Prostate gland (tissue), 2 donors: ENCODE measurements at regions of chr14 and their contacts with region 1.

Region 1: GRCh38 chr14:23478111-23478759 is 8.7 kb downstream of the NGDN start:
- DNase-seq: peak; percentile 44
- H3K4me3 ChIP-seq: no peak overlapping the region
- H3K27ac ChIP-seq: no peak overlapping the region
- H3K4me1 ChIP-seq: no peaks in the 10 kb centered on the region
- H3K27me3 ChIP-seq: no peaks in the 10 kb centered on the region
- CTCF ChIP-seq: peak; percentile 34 to 86 (median 76)
- POLR2A ChIP-seq: no peak

Region 2: DNA sequence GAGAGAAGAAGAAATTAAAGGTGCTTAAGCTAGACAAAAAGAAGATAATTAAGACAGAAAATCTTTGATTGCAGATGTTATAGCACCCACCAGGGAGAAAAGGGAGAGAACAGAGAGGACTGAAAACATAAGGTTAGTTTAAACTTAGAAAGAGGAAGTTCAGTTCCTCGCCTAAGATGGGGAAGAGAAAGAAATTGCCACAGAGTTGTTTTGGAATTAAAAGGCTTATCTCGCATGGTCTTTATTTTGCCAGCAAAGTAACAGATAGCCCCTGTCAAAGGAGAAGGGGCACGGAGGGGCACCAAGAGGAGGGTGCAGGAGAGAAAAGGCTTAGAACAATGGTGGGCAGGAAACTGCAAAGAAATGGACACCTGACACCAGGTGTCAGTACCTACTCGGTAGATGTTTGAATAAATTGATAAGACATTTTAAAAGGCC is 729.6 kb before region 1 on chr14:
- intact Hi-C with region 1: no loop called
- DNase-seq: no peak
- H3K4me3 ChIP-seq: no peak overlapping the region
- H3K27ac ChIP-seq: no peak overlapping the region
- H3K4me1 ChIP-seq: no peaks in the 10 kb centered on the region
- H3K27me3 ChIP-seq: no peaks in the 10 kb centered on the region
- CTCF ChIP-seq: no peak
- POLR2A ChIP-seq: no peak

Region 3: DNA sequence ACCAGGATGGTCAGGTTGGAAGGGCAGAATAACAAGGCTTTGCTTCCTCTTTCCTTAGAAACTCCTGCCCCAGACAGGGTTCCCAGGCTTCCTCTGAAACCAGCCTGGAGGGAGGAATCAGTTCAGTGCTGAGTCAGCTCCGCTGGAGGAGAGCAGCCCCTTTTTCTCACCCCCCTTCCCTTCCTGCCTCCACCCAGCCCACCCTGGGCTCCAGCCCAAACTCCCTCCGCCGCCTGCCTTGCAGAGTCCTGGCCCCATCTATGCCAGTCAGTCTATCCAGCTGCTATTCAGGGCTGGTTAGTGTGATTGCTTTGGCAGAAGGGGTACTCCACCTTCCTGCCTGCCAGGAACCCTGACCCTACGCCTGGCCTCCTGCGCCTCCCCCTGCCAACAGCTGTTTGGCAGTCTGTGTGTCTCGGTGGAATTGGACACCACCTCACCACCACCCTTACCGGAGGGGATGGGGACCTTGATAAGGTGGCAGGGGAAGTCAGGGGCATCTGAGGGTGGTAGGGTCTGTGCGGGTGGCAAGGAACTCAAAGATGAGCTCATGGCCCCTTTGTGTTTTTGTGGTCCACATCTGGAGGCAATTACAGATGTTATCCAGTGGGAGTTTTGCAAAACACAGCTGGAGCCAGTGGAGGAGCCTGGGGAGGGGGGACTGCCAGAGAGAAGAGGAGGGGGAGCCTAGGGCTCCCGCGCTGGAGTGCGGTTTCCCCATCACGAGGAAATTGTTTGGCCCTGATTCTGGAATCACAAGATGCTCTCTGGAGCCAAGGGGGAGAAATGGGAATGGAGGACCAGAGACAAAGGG is 629.7 kb before region 1 on chr14:
- intact Hi-C with region 1: no loop called
- DNase-seq: no peak
- H3K4me3 ChIP-seq: no peak overlapping the region
- H3K27ac ChIP-seq: peak overlapping the region; percentile 72 to 80
- H3K4me1 ChIP-seq: peaks cover 15% of the 10 kb centered on the region
- H3K27me3 ChIP-seq: no peaks in the 10 kb centered on the region
- CTCF ChIP-seq: no peak
- POLR2A ChIP-seq: no peak

Region 4: DNA sequence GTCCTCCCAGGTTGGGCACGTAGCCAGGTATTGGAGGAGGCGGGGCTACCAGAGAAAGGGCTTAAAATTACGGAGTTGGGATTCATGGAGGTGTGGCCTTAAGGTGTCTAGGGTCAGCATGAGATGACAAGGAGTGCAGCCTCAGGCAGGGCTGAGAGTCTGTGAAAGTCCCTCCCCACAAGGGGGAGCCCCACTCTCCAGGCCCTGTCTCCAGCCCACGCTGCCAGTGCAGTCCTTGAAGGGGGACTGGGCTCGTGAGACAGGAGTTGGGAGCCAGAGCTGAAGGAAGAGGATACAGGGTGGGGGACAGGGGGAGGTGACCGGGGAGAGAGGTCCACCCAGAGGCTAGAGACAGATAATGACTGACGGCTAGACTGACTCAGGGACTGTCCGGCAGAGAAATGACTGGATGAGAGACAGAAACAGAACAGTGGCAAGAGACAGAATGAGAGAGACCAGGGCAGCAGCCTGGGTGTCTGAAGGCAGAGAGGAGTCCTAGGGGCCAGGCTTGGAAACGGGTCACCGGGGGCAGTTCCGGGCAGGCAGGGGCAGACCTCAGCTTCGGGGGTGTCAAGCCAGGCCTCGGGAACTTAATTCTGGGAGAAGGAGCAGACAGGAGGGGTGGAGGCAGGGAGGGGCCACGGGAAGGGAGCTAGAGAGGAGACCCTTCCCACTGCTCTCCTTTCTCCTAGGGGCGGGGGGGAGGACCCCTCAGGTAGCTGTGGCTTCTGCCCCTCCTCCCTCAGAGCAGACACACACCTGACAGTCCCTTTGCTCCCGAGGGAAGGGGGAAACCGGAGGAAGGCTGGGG is 421.9 kb before region 1 on chr14:
- intact Hi-C with region 1: no loop called
- DNase-seq: peak; percentile 44
- H3K4me3 ChIP-seq: peak overlapping the region in 1 of 2 donors; percentile 63
- H3K27ac ChIP-seq: no peak overlapping the region
- H3K4me1 ChIP-seq: no peaks in the 10 kb centered on the region
- H3K27me3 ChIP-seq: no peaks in the 10 kb centered on the region
- CTCF ChIP-seq: peak in 3 of 4 experiments; percentile 32 to 70 (median 57)
- POLR2A ChIP-seq: no peak

Region 5: DNA sequence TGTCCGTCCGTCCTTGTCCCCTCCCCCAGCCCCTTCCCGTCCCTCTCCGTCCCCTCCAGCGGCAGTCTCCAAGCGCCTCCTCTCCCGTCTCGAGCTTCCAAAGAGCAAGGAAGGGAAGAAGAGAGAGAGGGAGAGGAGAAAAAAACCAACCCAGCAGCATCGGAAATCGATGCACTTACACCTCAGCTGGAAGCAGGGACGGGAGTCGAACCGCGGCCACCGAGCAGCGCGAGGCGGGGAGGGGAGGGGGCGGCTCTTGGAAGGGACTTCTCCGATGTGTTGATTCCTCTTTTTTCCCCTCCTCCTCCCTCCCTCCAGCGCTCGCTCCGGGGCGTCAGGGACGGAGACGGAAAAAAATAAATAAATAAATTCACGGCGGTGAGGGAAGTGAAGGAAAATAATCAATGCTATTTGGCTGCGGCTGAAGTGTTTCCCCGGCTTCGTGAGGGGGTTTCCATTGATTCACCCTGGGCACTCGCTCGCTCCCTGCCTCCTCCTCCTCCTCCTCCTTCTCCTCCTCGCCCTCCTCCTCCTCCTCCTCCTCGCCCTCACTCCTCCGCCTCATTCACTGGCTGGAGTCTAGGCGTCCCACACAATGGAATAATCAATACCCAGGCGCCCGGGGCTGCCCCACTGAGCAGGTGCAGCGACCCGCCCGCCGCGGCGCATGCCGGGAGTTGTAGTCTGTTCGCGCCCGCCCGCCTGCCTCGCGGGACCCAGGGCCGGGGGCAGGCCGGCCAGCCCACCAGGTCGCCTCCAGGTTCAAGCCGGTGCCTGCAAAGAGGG is 73.1 kb after region 1 on chr14 and contains the start of gene ZFHX2:
- intact Hi-C with region 1: no loop called
- DNase-seq: peak; percentile 64
- H3K4me3 ChIP-seq: peak within 1 kb of the TSS; percentile 36 to 45
- H3K27ac ChIP-seq: peak within 1 kb of the TSS; percentile 9 to 42
- H3K4me1 ChIP-seq: no peaks in the 10 kb centered on the region
- H3K27me3 ChIP-seq: no peaks in the 10 kb centered on the region
- CTCF ChIP-seq: no peak
- POLR2A ChIP-seq: no peak
- total RNA-seq, gene ZFHX2: 2.5 to 3.1 TPM

Region 6: GRCh38 chr14:23567192-23568020 is 89.2 kb after region 1 on chr14 and contains the start of gene AP1G2:
- intact Hi-C with region 1: loop called (anchors 5 kb)
- DNase-seq: peak; percentile 85
- H3K4me3 ChIP-seq: peak within 1 kb of the TSS; percentile 51 to 57
- H3K27ac ChIP-seq: peak within 1 kb of the TSS; percentile 83 to 90
- H3K4me1 ChIP-seq: no peaks in the 10 kb centered on the region
- H3K27me3 ChIP-seq: no peaks in the 10 kb centered on the region
- CTCF ChIP-seq: peak in 1 of 4 experiments; percentile 11
- POLR2A ChIP-seq: peak; percentile 75
- total RNA-seq, gene AP1G2: 95.3 to 134 TPM